ENCODE measurements at regions of chr6 and their contacts with region 1.

Region 1: DNA sequence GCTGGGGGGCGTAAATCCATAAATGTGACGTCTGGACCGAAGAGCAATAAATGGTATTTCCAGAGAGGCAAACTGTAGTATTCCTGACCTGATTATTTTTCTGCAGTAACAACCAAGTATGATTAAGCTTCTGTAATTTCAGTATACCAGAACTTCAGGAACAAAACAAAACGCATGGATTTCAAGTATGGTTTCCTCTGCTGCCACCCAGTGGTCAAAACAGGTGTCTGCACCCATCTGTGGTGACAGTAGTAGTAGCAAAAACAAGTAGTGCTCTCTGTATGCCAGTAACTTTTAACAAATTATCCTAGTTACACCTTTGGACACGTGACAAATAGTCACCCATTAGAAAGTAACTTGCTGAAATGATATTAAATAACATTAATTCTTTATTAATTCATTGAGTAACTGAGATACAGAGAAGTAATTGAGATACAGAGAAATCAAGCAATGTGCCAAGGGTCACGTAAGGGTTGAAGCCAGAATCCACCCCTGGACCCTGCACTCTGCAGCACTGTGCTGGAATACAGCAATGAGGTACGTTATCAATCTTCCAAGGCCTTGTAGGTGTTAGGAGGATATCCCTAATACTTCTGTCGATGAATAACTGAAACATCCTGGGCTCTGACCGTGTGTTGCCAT is 7.9 kb downstream of the CALHM4 start:
- DNase-seq: peak; percentile 28 to 69 (median 57)
- ATAC-seq: peak; percentile 90
- H3K4me3 ChIP-seq: no peak overlapping the region
- H3K4me3 Mint-ChIP-seq: peak overlapping the region in 1 of 10 donors; percentile 40
- H3K27ac ChIP-seq: no peak overlapping the region
- H3K27ac Mint-ChIP-seq: no peak overlapping the region
- H3K4me1 ChIP-seq: no peaks in the 10 kb centered on the region
- H3K4me1 Mint-ChIP-seq: peaks cover 3 to 14% (median 10%) of the 10 kb centered on the region in 7 donors
- H3K27me3 ChIP-seq: no peaks in the 10 kb centered on the region
- H3K27me3 Mint-ChIP-seq: peaks cover 0 to 35% (median 18%) of the 10 kb centered on the region in 5 donors

Region 2: DNA sequence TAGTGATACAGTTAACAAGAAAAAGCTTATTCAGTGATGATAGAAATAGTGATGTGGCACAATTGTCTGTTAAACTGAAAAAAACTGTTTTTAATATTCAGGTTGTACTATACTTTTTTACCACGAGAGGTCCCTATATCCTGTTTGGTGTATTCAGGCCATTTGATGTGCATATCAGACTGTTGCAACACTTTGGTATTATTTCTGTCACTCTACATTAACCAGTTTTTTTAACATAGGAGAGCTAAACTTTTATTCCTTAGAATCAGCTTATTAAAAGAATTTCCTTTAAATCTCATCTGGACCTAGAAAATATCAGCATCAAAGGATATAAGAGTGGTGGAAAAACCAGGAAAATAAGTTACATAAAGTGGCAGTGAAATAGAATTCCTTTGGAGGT is 344.4 kb before region 1 on chr6:
- CTCF ChIA-PET with region 1: no interaction called
- POLR2A ChIA-PET with region 1: no interaction called
- intact Hi-C with region 1: loop called (anchors 1 kb)
- DNase-seq: peak in 6 of 9 donors; percentile 10 to 55 (median 44)
- ATAC-seq: peak; percentile 86
- H3K4me3 ChIP-seq: no peak overlapping the region
- H3K4me3 Mint-ChIP-seq: no peak overlapping the region
- H3K27ac ChIP-seq: no peak overlapping the region
- H3K27ac Mint-ChIP-seq: peak overlapping the region in 5 of 9 donors; percentile 7 to 76 (median 44)
- H3K4me1 ChIP-seq: no peaks in the 10 kb centered on the region
- H3K4me1 Mint-ChIP-seq: peaks cover 0 to 12% (median 6%) of the 10 kb centered on the region in 7 donors
- H3K27me3 ChIP-seq: no peaks in the 10 kb centered on the region
- H3K27me3 Mint-ChIP-seq: no peaks in the 10 kb centered on the region

Region 3: DNA sequence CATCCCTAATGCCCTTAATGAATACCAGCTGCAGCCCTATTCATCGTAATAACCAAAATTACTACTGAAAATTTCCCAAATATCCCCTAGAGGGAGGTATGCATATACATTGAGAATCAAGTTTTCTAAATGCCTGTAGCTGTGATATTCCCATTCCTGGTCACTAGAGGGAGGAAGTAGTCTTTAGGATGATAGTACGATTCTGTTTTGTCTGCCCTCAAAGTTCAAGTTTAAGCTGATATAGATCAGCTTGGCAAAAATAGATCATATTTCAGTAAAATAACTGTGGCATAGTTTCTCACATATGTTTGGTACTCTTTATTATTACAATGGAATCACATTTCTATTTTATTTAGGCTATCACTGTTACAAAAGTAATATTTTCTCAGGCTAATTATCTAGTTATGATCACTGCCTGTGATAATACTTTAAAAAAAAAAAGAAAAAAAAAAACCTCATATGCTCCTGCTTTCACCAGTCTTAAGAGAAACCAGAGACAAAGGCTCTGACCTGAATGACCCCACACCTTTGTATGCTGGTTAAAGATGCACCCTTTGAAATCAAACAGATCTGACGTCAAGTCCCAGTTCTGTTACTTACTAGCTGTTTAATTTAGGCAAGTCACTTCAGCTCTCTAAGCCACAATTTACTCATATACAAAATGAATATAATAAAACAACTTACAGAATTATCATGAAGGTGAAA is 292.8 kb before region 1 on chr6:
- CTCF ChIA-PET with region 1: interaction called, 8 read pairs
- POLR2A ChIA-PET with region 1: no interaction called
- intact Hi-C with region 1: loop called in 1 of 2 experiments (anchors 1 kb)
- DNase-seq: peak in 7 of 9 donors; percentile 21 to 54 (median 49)
- ATAC-seq: peak; percentile 93
- H3K4me3 ChIP-seq: no peak overlapping the region
- H3K4me3 Mint-ChIP-seq: no peak overlapping the region
- H3K27ac ChIP-seq: peak overlapping the region; percentile 6
- H3K27ac Mint-ChIP-seq: peak overlapping the region in 7 of 9 donors; percentile 1 to 60 (median 23)
- H3K4me1 ChIP-seq: no peaks in the 10 kb centered on the region
- H3K4me1 Mint-ChIP-seq: peaks cover 8 to 56% (median 49%) of the 10 kb centered on the region in 7 donors
- H3K27me3 ChIP-seq: no peaks in the 10 kb centered on the region
- H3K27me3 Mint-ChIP-seq: no peaks in the 10 kb centered on the region

Region 4: GRCh38 chr6:116580198-116580597 is 18.7 kb after region 1 on chr6:
- CTCF ChIA-PET with region 1: interaction called, 3 read pairs
- POLR2A ChIA-PET with region 1: no interaction called
- intact Hi-C with region 1: loop called in 1 of 2 experiments (anchors 2 kb)
- DNase-seq: no peak
- ATAC-seq: no peak
- H3K4me3 ChIP-seq: no peak overlapping the region
- H3K4me3 Mint-ChIP-seq: no peak overlapping the region
- H3K27ac ChIP-seq: no peak overlapping the region
- H3K27ac Mint-ChIP-seq: peak overlapping the region in 1 of 9 donors; percentile 1
- H3K4me1 ChIP-seq: peaks cover 0 to 3% of the 10 kb centered on the region in 2 donors
- H3K4me1 Mint-ChIP-seq: peaks cover 18 to 37% (median 32%) of the 10 kb centered on the region in 7 donors
- H3K27me3 ChIP-seq: no peaks in the 10 kb centered on the region
- H3K27me3 Mint-ChIP-seq: no peaks in the 10 kb centered on the region

Measured in naive thymus-derived CD4-positive, alpha-beta T cell (primary cell).